Dorsolateral prefrontal cortex (tissue), 120 donors: ENCODE measurements at regions of chr6 and their contacts with region 1.

Region 1: DNA sequence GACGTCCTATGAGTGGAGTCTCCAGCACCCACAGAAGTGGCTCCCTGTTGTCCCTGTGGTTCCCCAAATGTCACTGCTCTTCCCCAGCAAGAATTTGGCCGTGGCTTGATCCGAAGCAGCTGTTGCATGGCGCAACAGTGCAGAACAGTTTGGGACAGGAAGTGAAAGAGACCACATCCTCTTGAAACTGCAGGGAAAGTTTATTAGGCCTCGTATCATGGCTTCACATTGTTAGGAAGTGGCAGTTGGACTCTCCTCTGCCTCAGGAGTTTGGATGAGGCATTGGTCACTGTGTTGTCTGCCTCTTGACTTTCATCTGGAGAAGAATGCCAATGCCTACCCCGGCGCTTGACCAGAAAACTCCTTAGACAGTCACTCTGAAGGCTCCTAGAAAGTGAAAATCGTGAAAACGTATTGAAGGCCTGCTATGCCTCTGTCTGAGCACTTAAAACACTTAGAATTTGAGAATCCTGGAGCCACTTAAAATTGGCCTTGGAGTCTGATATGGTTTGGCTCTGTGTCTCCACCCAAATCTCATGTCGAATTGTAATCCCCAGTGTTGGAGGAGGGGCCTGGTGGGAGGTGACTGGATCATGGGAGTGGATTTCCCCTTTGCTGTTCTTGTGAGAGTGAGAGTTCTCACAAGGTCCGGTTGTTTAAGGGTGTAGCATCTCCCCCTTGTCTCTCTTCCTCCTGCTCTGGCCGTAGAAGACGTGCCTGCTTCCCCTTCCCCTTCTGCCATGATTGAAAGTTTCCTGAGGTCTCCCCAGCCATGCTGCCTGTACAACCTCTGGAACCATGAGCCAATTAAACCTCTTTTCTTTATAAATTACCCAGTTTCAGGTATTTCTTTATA is 334.9 kb upstream of the JARID2 start:
- DNase-seq: no peak
- H3K4me3 ChIP-seq: no peak overlapping the region
- H3K27ac ChIP-seq: peak overlapping the region in 1 of 59 donors; percentile 23
- H3K27me3 ChIP-seq: peaks cover 0 to 4% (median 0%) of the 10 kb centered on the region in 45 donors
- CTCF ChIP-seq: no peak

Region 2: GRCh38 chr6:14144678-14145113 is 766.2 kb before region 1 on chr6:
- intact Hi-C with region 1: no loop called
- DNase-seq: peak in 7 of 10 donors; percentile 26 to 72 (median 50)
- H3K4me3 ChIP-seq: no peak overlapping the region
- H3K27ac ChIP-seq: no peak overlapping the region
- H3K27me3 ChIP-seq: no peaks in the 10 kb centered on the region
- CTCF ChIP-seq: peak; percentile 62 to 96 (median 88)

Region 3: DNA sequence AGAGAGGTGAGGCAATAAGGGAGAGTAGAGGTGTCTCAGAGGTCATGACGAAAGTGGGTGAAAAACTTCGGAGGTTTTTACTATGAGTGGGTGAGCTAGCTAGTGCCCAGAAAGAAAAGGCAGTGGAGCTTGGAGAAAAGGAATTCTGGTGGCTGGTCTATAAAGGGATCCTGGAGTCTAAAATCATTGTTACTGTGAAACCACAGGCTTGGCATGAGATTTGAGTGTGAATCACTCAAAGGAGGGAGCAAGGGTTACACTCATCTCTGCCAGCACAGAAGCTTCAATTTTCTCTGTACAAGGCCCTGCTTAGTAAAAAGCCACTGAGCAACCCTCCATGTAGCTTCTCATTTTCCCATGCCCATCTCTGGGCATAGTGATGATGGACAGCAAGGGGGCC is 745.8 kb before region 1 on chr6:
- intact Hi-C with region 1: no loop called
- DNase-seq: no peak
- H3K4me3 ChIP-seq: no peak overlapping the region
- H3K27ac ChIP-seq: no peak overlapping the region
- H3K27me3 ChIP-seq: no peaks in the 10 kb centered on the region
- CTCF ChIP-seq: no peak

Region 4: GRCh38 chr6:14799928-14800327 is 111.0 kb before region 1 on chr6:
- intact Hi-C with region 1: loop called in 1 of 2 experiments (anchors 10 kb)
- DNase-seq: peak in 7 of 10 donors; percentile 10 to 67 (median 53)
- H3K4me3 ChIP-seq: no peak overlapping the region
- H3K27ac ChIP-seq: peak overlapping the region in 7 of 59 donors; percentile 5 to 62 (median 40)
- H3K27me3 ChIP-seq: no peaks in the 10 kb centered on the region
- CTCF ChIP-seq: peak in 2 of 56 donors; percentile 10